Activated CD8-positive, alpha-beta T cell treated with anti-CD3 and anti-CD28 coated beads, Interleukin-2, amount 10 ng/mL, durations not matched to agents 7 days and 5 days (primary cell): ENCODE measurements at regions of chr15 and their contacts with region 1.

Region 1: DNA sequence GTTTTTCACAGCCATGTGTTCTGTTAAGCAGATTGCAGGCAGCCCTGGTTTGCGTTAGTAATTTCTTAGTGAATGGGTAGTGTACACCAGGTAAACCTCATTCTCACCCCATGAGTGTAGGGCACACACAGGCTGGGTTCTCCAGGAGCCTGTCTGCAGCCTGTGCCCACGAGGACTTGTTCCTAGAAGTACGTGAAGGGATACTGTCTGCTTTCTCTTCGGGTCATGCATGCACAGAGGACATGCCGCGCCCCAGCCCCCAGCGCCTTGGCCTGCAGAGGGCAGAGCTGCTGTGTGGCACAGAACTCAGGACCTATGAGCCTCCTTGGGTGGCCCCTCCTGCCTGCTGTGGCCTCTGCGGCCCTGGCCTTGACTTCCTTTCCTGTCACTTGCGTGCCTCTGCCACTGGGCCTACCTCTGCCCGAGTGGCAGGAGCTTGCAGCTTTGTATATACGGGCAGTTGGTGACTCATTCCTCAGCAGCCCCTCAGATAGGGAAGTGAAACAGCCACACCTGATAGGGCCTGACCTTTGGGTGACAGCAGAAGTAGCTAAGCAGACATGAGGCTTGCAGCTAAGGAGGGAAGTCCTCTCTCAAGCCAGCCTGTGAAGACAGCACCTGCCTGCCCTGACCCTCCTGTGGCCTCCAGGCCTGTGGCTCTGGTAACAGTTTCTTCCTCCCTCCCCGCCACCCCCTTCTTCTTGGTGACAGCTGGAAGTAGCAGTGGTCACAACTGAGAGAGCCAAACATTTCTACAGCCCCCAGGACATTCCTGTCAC is 19.5 kb downstream of the PPCDC start:
- DNase-seq: peak; percentile 91
- ATAC-seq: peak; percentile 91
- H3K4me3 Mint-ChIP-seq: peak overlapping the region; percentile 55
- H3K27ac Mint-ChIP-seq: peak overlapping the region; percentile 78
- H3K4me1 Mint-ChIP-seq: peaks cover 90% of the 10 kb centered on the region
- H3K27me3 Mint-ChIP-seq: no peaks in the 10 kb centered on the region

Region 2: GRCh38 chr15:75023181-75023871 is 19.6 kb before region 1 on chr15 and contains the start of gene PPCDC:
- CTCF ChIA-PET with region 1: interaction called, 30 read pairs
- POLR2A ChIA-PET with region 1: interaction called, 9 read pairs
- DNase-seq: peak; percentile 97
- ATAC-seq: peak; percentile 100
- H3K4me3 Mint-ChIP-seq: peak within 1 kb of the TSS; percentile 86
- H3K27ac Mint-ChIP-seq: peak within 1 kb of the TSS; percentile 93
- H3K4me1 Mint-ChIP-seq: peaks cover 26% of the 10 kb centered on the region
- H3K27me3 Mint-ChIP-seq: no peaks in the 10 kb centered on the region
- total RNA-seq, gene PPCDC: 27.3 to 29.1 TPM

Region 3: DNA sequence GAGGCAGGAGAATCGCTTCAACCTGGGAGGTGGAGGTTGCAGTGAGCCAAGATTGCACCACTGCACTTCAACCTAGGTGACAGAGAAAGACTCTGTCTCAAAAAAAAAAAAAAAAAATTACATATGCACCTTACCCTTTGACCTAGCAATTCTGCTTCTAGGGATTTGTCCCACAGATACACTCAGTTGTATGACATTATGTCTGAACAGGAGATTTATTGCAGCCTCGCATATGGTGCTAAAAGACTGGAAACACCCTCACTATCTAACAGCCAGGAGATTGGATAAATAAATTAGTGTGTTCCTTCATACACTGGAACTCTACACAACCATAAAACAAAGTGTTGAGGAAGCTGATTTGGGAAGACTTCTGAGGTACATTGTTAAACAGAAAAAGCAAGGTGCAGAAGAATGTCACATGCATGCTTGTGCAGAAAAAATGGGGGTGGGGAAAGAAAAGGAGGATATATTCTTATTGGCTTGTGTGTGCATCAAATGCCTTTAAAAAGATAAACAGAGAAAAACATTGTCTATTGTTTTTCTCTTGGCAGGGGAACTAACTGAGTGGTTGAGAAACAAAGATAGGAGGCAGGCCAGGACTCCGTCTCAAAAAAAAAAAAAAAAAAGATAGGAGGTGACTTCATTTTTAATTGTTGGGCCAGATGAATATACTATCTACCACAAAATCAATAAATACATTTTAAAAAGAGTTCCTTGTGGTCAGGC is 11.4 kb after region 1 on chr15:
- CTCF ChIA-PET with region 1: interaction called, 10 read pairs
- POLR2A ChIA-PET with region 1: interaction called, 8 read pairs
- DNase-seq: no peak
- ATAC-seq: no peak
- H3K4me3 Mint-ChIP-seq: no peak overlapping the region
- H3K27ac Mint-ChIP-seq: no peak overlapping the region
- H3K4me1 Mint-ChIP-seq: peaks cover 21% of the 10 kb centered on the region
- H3K27me3 Mint-ChIP-seq: no peaks in the 10 kb centered on the region

Region 4: GRCh38 chr15:75069301-75069925 is 26.5 kb after region 1 on chr15:
- CTCF ChIA-PET with region 1: interaction called, 6 read pairs
- POLR2A ChIA-PET with region 1: interaction called, 10 read pairs
- DNase-seq: no peak
- ATAC-seq: no peak
- H3K4me3 Mint-ChIP-seq: no peak overlapping the region
- H3K27ac Mint-ChIP-seq: peak overlapping the region; percentile 37
- H3K4me1 Mint-ChIP-seq: peaks cover 56% of the 10 kb centered on the region
- H3K27me3 Mint-ChIP-seq: no peaks in the 10 kb centered on the region

Region 5: DNA sequence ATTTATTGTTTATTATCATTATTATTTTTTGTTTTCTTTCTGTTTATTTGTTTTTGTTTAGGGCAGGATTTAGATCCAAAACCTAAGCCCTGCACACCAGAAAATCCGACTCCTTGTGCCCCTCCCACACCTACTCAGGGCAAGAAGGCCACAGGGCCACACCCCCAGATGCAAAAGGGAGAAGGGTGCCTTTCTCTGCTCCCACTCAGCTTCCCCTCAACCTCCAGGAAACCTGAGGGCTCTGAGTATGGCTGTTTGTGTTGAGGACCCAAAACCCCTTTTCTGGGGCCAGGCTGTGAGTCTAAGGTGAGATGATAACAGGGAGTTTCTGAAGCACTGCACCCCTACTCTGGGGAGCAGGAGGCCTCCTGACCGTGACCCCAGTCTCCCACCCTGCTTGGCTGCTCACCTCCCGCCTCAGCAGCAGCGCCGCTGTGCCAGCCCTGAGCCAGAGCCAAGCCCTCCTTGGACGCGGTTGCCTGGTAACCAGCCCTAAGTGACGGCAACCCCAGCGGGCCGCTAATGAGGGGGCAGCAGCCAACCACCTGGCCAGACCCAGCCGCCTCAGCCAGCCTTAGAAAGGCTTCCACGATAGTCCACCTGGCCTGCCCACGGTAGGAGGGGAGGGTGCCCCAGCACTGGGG is 152.3 kb after region 1 on chr15:
- CTCF ChIA-PET with region 1: interaction called, 13 read pairs
- POLR2A ChIA-PET with region 1: interaction called, 3 read pairs
- DNase-seq: no peak
- ATAC-seq: no peak
- H3K4me3 Mint-ChIP-seq: no peak overlapping the region
- H3K27ac Mint-ChIP-seq: no peak overlapping the region
- H3K4me1 Mint-ChIP-seq: peaks cover 29% of the 10 kb centered on the region
- H3K27me3 Mint-ChIP-seq: peaks cover 7% of the 10 kb centered on the region

Region 6: DNA sequence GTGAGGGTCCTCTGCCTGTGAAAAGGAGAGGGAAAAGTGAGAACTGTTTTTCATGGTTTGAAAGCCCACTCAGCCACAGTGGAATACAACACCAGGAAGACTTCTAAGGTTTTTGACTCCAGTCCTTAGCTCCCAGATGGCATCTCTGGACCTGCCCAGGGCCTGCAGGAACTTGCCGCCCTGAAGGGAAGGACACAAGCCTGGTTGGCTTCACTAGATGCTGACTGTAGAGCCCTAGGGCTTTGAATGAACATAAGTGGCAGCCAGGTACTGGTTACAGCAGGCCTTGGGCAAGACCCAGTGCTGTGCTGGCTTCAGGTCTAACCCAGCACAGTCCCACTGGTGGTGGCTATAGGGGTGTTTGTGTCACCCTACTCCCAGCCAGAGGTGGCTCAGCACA is 995.6 kb after region 1 on chr15:
- CTCF ChIA-PET with region 1: no interaction called
- POLR2A ChIA-PET with region 1: no interaction called
- DNase-seq: no peak
- ATAC-seq: no peak
- H3K4me3 Mint-ChIP-seq: no peak overlapping the region
- H3K27ac Mint-ChIP-seq: no peak overlapping the region
- H3K4me1 Mint-ChIP-seq: no peaks in the 10 kb centered on the region
- H3K27me3 Mint-ChIP-seq: peaks cover 33% of the 10 kb centered on the region